ENCODE measurements at regions of chr17 and their contacts with region 1.

Region 1: GRCh38 chr17:50626037-50626574 is 8.6 kb upstream of the ABCC3 start:
- DNase-seq: no peak
- H3K4me3 ChIP-seq: no peak overlapping the region
- H3K27me3 ChIP-seq: no peaks in the 10 kb centered on the region
- CTCF ChIP-seq: peak; percentile 82

Region 2: GRCh38 chr17:50547035-50547735 is 78.9 kb before region 1 on chr17 and contains the start of gene SPATA20:
- CTCF ChIA-PET with region 1: interaction called, 186 read pairs
- POLR2A ChIA-PET with region 1: no interaction called
- DNase-seq: peak; percentile 29
- H3K4me3 ChIP-seq: peak within 1 kb of the TSS; percentile 52
- H3K27me3 ChIP-seq: no peaks in the 10 kb centered on the region
- CTCF ChIP-seq: peak; percentile 96
- polyA plus RNA-seq, gene SPATA20: 27.7 and 46.4 TPM in 2 replicates

Region 3: GRCh38 chr17:50638851-50639767 is 13.0 kb after region 1 on chr17:
- CTCF ChIA-PET with region 1: interaction called, 19 read pairs
- POLR2A ChIA-PET with region 1: interaction called, 4 read pairs
- DNase-seq: peak; percentile 75
- H3K4me3 ChIP-seq: no peak overlapping the region
- H3K27me3 ChIP-seq: no peaks in the 10 kb centered on the region
- CTCF ChIP-seq: no peak

Region 4: DNA sequence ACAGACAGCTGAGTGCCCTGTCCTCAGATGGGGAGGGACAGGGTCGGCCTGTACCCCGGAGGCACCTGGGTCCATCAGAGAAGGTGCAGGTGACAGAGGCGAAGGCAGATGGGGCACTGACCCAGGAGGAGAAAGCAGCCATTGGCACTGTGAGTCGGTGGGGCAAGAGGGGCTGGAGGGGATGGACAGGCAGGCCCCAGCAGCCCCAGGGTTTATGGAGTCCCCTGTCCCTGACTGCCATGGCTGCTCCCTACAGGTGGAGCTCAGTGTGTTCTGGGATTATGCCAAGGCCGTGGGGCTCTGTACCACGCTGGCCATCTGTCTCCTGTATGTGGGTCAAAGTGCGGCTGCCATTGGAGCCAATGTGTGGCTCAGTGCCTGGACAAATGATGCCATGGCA is 49.5 kb after region 1 on chr17:
- CTCF ChIA-PET with region 1: interaction called, 17 read pairs
- POLR2A ChIA-PET with region 1: no interaction called
- DNase-seq: no peak
- H3K4me3 ChIP-seq: no peak overlapping the region
- H3K27me3 ChIP-seq: no peaks in the 10 kb centered on the region
- CTCF ChIP-seq: no peak

Region 5: GRCh38 chr17:50686494-50687199 is 60.5 kb after region 1 on chr17:
- CTCF ChIA-PET with region 1: interaction called, 130 read pairs
- POLR2A ChIA-PET with region 1: no interaction called
- DNase-seq: no peak
- H3K4me3 ChIP-seq: no peak overlapping the region
- H3K27me3 ChIP-seq: no peaks in the 10 kb centered on the region
- CTCF ChIP-seq: no peak

Region 6: DNA sequence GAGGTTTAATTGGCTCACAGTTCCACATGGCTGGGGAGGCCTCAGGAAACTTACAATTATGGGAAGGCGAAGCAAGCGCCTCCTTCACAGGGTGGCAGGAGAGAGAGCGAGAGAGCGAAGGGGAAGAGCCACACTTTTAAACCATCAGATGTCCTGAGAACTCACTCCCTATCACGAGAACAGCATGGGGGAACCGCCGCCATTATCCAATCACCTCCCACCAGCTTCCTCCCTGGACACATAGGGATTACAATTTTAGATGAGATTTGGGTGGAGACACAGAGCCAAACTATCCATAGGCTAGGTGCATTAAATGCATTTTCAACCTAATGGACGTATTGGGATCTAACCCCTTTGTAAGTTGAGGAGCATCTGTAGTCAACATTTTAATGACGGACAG is 86.5 kb after region 1 on chr17:
- CTCF ChIA-PET with region 1: no interaction called
- POLR2A ChIA-PET with region 1: no interaction called
- DNase-seq: no peak
- H3K4me3 ChIP-seq: no peak overlapping the region
- H3K27me3 ChIP-seq: 0 out of 2 replicates have a peak, but pooled peaks cover 2% of the 10 kb centered on the region
- CTCF ChIP-seq: no peak

Region 7: GRCh38 chr17:50883850-50884438 is 257.8 kb after region 1 on chr17:
- CTCF ChIA-PET with region 1: no interaction called
- POLR2A ChIA-PET with region 1: no interaction called
- DNase-seq: no peak
- H3K4me3 ChIP-seq: no peak overlapping the region
- H3K27me3 ChIP-seq: peaks cover 4% of the 10 kb centered on the region; the same call in 1 of the 2 replicates
- CTCF ChIP-seq: no peak

Region 8: GRCh38 chr17:51046514-51047384 is 420.6 kb after region 1 on chr17:
- CTCF ChIA-PET with region 1: no interaction called
- POLR2A ChIA-PET with region 1: no interaction called
- DNase-seq: no peak
- H3K4me3 ChIP-seq: peak overlapping the region; percentile 1; the same call in 1 of the 2 replicates
- H3K27me3 ChIP-seq: no peaks in the 10 kb centered on the region
- CTCF ChIP-seq: no peak

Region 9: DNA sequence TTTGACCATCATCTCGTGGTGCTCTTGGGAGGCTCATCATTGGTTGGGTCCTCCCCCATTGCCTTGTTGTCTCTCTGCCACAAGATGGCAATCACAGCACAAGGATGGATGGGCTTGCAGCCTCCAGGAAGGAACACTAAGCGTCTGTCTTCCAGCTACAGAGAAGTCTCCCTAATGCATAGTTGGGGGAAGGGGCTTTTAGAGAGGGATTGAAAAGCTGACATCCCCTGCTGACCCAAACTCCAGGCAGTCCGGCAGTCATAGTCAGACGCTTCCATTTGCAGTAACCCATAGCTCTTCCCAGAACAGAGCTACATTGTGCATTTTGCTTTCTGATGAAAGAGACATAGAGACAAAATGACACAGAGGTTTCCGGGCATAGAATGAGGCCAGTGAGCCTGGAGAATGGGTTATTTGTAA is 745.6 kb after region 1 on chr17:
- CTCF ChIA-PET with region 1: no interaction called
- POLR2A ChIA-PET with region 1: no interaction called
- DNase-seq: no peak
- H3K4me3 ChIP-seq: no peak overlapping the region
- H3K27me3 ChIP-seq: no peaks in the 10 kb centered on the region; the same call in 1 of the 2 replicates
- CTCF ChIP-seq: peak; percentile 53